ENCODE measurements at regions of chr14 and their contacts with region 1.

Region 1: GRCh38 chr14:29016050-29016900 is 249.7 kb downstream of the FOXG1 start:
- DNase-seq: peak; percentile 63
- H3K4me3 ChIP-seq: no peak overlapping the region
- H3K27ac ChIP-seq: no peak overlapping the region
- H3K4me1 ChIP-seq: no peaks in the 10 kb centered on the region
- H3K27me3 ChIP-seq: peaks cover 5% of the 10 kb centered on the region
- CTCF ChIP-seq: peak; percentile 93

Region 2: GRCh38 chr14:28773861-28774691 is 242.2 kb before region 1 on chr14:
- CTCF ChIA-PET with region 1: no interaction called
- POLR2A ChIA-PET with region 1: no interaction called
- intact Hi-C with region 1: loop called (anchors 10 kb)
- DNase-seq: peak; percentile 64
- H3K4me3 ChIP-seq: no peak overlapping the region
- H3K27ac ChIP-seq: no peak overlapping the region
- H3K4me1 ChIP-seq: no peaks in the 10 kb centered on the region
- H3K27me3 ChIP-seq: peaks cover 100% of the 10 kb centered on the region
- CTCF ChIP-seq: peak; percentile 65

Region 3: GRCh38 chr14:29521526-29522137 is 505.4 kb after region 1 on chr14:
- CTCF ChIA-PET with region 1: no interaction called
- POLR2A ChIA-PET with region 1: no interaction called
- intact Hi-C with region 1: loop called (anchors 2 kb)
- DNase-seq: peak; percentile 54
- H3K4me3 ChIP-seq: no peak overlapping the region
- H3K27ac ChIP-seq: no peak overlapping the region
- H3K4me1 ChIP-seq: no peaks in the 10 kb centered on the region
- H3K27me3 ChIP-seq: peaks cover 6% of the 10 kb centered on the region
- CTCF ChIP-seq: peak; percentile 74